ENCODE measurements at regions of chr5 and their contacts with region 1.

Region 1: DNA sequence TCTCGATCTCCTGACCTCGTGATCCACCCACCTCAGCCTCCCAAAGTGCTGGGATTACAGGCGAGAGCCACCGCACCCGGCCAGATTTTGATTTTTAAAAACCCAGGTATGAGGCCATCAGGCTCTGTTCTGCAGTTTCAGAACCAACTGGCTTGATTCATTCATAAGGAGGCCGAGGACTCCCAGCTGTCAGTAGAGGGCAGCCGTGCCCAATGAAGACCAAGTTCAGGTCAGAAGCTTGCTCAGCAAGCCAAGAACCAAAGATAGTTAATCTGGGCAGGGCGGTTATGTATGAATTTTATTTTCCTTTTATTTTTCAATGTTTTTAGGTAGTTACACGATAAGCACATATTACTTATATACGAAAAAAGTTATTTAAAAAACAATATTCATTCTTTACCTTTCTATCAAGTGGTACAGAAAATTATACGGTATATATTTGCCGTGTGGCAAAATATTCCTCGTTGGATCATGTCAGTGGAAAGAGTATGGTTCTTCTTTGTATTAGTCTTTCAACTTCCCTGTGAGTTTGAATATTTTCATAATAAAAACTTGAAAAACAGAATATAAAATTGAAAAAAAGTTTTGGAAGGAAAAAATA is 18.0 kb downstream of the MGAT1 start:
- DNase-seq: peak; percentile 71
- ATAC-seq: peak; percentile 27
- H3K4me3 Mint-ChIP-seq: no peak overlapping the region
- H3K27ac Mint-ChIP-seq: peak overlapping the region; percentile 60
- H3K4me1 Mint-ChIP-seq: peaks cover 41% of the 10 kb centered on the region
- H3K27me3 Mint-ChIP-seq: no peaks in the 10 kb centered on the region; the same call in 1 of the 2 replicates
- CTCF ChIP-seq: no peak

Region 2: DNA sequence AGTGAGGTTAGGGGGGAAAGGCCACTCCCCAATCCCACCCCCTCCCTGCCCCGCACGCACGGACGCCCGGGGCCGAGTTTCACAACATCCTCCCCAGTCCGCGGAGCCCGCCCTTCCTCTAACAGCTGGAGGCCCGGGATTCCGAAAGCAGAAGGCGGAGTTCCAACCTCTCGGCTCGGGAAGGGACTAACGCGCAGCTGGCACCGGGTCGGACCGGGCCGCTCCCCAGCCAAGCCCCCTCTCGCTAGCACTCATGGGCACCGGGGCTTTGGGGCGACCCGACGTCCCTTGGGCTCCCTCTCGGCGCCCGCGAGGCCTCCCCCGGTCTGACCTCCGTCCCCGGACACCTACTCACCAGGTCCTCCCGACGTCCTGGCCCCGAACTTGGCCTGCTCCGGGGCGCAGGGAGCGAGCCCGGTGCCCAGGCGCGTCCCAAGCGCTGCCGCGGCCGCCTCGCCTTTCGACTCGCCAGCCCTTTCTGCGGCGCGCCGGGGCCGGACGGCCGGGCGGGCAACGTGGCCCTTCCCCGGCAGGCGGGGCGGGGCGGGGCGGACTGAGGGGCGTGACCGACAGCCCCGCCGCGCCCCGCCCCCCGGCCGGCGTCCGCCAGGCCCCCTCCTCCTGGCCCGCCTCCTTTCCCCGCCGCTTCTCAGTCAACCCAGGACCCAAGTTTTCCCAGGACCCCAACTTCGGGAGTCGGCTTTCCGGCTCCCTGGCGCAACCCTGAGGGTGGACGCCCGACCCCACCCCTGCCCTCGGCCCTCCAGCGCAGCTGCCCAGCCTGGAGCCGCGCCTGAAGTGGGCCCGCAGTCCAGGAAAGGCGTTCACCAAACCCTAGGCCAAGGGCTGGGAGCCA is 18.0 kb after region 1 on chr5 and contains the start of gene MGAT1:
- CTCF ChIA-PET with region 1: interaction called, 37 read pairs
- POLR2A ChIA-PET with region 1: no interaction called
- DNase-seq: peak; percentile 75
- ATAC-seq: peak; percentile 77
- H3K4me3 Mint-ChIP-seq: peak within 1 kb of the TSS; percentile 80
- H3K27ac Mint-ChIP-seq: peak within 1 kb of the TSS; percentile 97
- H3K4me1 Mint-ChIP-seq: peaks cover 72% of the 10 kb centered on the region
- H3K27me3 Mint-ChIP-seq: no peaks in the 10 kb centered on the region
- CTCF ChIP-seq: no peak
- total RNA-seq, gene MGAT1: 78.4 to 93.6 TPM (median 86.3 TPM) in 3 replicates